WTC11 (cell line): ENCODE measurements at regions of chr15 and their contacts with region 1.

Region 1: DNA sequence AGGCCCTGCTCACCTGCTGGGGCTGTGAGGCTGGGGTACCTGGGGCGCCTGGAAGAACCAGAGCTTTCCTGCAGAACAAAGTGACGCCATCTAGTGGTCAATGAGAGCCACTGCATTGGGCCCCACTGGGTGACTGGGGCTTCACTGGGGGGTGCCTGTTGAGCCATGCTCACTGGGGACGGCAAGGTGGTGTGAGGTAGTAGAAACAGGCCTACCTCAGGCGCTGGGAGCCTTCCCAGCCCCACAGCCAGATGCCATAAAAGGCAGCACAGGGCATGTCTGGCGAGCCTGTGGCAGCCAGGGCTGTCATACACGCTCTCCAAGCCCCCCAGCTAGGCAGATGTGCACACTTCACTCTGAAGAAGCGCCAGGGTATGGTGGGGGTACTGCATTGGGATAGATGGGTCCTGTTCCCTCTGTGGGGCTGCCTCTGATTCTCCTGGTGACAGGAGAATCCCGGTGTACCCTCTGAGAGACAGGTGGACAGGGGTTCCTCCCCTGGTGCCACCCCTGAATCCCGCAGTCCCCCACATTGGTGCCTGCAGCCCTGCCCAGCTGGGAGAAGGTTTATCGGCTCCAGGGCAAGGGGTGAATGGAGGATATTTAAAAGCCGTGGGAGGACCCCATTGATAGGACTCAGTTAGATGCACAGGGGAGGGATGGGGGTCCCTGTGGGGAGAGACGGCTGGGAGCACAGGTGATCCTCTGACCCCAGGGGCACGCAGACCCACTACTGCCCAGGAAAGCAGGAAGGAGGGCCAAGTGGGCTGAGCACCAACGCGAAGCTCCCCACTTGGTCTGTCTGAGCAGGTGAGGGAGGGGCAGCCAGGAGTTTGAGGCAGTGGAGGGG is 178.8 kb downstream of the NSMCE3 start:
- DNase-seq: peak; percentile 77
- ATAC-seq: peak; percentile 82
- H3K4me3 Mint-ChIP-seq: no peak overlapping the region
- H3K27ac Mint-ChIP-seq: no peak overlapping the region
- H3K4me1 Mint-ChIP-seq: peaks cover 7% of the 10 kb centered on the region
- H3K27me3 Mint-ChIP-seq: no peaks in the 10 kb centered on the region
- CTCF ChIP-seq: peak; percentile 99

Region 2: GRCh38 chr15:28935326-28935725 is 155.5 kb before region 1 on chr15:
- CTCF ChIA-PET with region 1: interaction called, 15 read pairs
- POLR2A ChIA-PET with region 1: no interaction called
- DNase-seq: peak; percentile 81
- ATAC-seq: peak; percentile 83
- H3K4me3 Mint-ChIP-seq: no peak overlapping the region
- H3K27ac Mint-ChIP-seq: no peak overlapping the region
- H3K4me1 Mint-ChIP-seq: peaks cover 23% of the 10 kb centered on the region
- H3K27me3 Mint-ChIP-seq: no peaks in the 10 kb centered on the region
- CTCF ChIP-seq: no peak; the same call in 1 of the 2 replicates

Region 3: DNA sequence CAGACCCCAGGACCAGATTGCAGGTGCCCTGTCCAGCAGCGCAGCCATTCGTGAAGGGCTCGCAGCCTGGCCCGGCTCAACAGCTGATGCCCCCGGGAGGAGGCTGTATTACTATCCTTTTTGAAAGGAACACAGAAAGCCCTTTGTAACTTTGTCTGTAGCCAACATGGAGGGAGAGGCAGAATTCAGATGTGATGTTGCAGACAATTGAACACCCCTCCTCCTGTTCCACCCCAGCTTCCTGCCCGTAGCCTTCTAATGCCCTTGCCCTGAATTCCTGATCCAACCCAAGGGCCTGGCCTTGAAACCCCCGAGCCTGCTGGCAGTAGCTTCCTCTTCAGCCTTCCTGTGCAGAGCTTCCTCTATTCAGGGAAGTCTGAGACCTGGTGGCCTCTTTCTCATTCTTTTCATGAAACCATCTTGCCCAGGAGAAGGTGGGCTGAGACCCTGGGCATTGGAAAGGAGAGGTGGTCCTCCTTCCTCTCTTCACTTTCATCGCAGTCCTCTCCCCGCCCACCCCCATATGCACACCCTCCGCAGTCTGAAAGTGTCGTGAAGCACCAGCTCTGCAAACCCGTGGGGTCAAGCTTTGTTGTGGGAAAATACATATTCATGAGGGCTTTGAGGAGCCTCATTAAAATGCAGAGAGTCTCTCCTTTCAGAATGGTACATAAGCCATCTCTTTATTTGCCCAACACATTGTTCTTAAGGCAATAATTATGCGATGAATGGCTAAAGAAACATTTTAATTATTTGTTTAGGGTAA is 95.8 kb before region 1 on chr15:
- CTCF ChIA-PET with region 1: interaction called, 37 read pairs
- POLR2A ChIA-PET with region 1: no interaction called
- DNase-seq: no peak
- ATAC-seq: peak; percentile 50
- H3K4me3 Mint-ChIP-seq: no peak overlapping the region
- H3K27ac Mint-ChIP-seq: no peak overlapping the region
- H3K4me1 Mint-ChIP-seq: peaks cover 28% of the 10 kb centered on the region
- H3K27me3 Mint-ChIP-seq: no peaks in the 10 kb centered on the region
- CTCF ChIP-seq: no peak

Region 4: DNA sequence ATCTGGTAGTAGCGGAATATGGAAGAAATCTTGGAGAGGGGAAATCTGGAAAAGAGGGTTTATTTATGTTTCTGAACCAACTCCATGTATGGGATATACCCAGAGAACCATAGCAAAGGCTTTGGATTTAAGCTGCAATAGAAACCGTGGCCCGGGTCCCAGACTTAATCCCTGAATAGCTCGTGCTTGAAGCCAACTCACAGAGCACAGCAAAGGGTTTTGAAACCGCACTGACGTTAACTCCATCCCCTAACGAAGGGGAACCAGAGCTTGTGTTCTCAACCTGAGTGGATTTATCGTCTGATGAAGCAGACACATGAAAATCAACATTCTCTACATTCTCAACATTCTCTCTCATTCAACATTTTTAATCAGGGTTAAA is 50.5 kb before region 1 on chr15:
- CTCF ChIA-PET with region 1: interaction called, 13 read pairs
- POLR2A ChIA-PET with region 1: no interaction called
- DNase-seq: no peak
- ATAC-seq: peak; percentile 33; the same call in 1 of the 2 replicates
- H3K4me3 Mint-ChIP-seq: no peak overlapping the region
- H3K27ac Mint-ChIP-seq: peak overlapping the region; percentile 81; the same call in 1 of the 2 replicates
- H3K4me1 Mint-ChIP-seq: peaks cover 26% of the 10 kb centered on the region
- H3K27me3 Mint-ChIP-seq: no peaks in the 10 kb centered on the region
- CTCF ChIP-seq: no peak

Region 5: DNA sequence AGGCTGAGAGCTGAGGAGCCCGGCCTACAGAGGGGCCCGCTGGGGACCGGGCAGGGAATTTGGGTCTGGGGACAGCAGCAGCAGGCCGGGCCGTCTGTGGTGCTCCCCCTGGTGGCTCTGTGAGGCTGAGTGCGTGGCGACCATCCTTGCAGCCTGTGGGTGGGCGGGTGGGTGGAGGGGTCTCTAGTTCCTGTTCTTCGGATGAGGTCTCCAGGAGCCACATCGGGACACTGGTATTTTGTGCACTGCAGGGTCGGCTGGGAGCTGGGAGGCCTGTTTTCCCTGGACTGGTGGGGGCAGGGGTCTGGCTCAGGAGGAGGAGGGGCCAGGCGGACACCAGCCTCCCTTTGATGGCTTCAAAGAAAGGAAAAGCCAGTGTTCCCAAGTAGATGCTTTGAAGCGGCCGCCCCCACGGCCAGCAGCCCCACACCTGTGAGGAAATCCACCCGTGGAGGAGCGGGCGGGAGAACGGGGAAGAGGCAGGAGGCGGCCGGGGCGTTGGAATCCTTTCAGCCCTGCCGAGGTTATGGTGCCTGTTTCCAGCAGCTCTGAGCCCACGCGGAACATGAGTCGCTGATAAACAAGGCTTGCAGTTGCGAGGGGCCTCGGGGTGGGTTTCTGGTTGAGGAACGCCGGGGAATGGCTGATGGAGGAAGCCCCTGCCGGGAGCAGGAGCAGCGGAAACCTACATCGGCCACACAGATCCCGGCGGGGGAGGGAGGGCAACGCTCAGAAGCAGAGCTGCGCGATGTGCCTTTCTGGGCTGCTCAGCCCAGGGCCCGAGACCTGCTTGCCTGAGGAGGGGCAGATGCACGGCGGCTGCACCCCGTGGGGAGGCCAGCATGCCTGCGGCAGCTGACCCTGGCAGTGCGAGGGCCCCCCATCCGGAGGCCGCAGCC is 24.5 kb after region 1 on chr15:
- CTCF ChIA-PET with region 1: interaction called, 13 read pairs
- POLR2A ChIA-PET with region 1: no interaction called
- DNase-seq: peak; percentile 69
- ATAC-seq: peak; percentile 73
- H3K4me3 Mint-ChIP-seq: peak overlapping the region; percentile 59
- H3K27ac Mint-ChIP-seq: no peak overlapping the region
- H3K4me1 Mint-ChIP-seq: peaks cover 10% of the 10 kb centered on the region
- H3K27me3 Mint-ChIP-seq: no peaks in the 10 kb centered on the region
- CTCF ChIP-seq: peak; percentile 44; the same call in 1 of the 2 replicates